ENCODE measurements at regions of chr6 and their contacts with region 1.

Region 1: GRCh38 chr6:24774696-24775519 is at the start of gene GMNN:
- DNase-seq: peak; percentile 55
- ATAC-seq: peak; percentile 97
- H3K4me3 ChIP-seq: peak within 1 kb of the TSS; percentile 95 to 99
- H3K27ac ChIP-seq: peak within 1 kb of the TSS; percentile 96
- H3K4me1 ChIP-seq: peaks cover 26% of the 10 kb centered on the region; the same call in 1 of the 2 replicates
- H3K27me3 ChIP-seq: no peaks in the 10 kb centered on the region
- CTCF ChIP-seq: no peak
- total RNA-seq, gene GMNN: 53.1 TPM

Region 2: DNA sequence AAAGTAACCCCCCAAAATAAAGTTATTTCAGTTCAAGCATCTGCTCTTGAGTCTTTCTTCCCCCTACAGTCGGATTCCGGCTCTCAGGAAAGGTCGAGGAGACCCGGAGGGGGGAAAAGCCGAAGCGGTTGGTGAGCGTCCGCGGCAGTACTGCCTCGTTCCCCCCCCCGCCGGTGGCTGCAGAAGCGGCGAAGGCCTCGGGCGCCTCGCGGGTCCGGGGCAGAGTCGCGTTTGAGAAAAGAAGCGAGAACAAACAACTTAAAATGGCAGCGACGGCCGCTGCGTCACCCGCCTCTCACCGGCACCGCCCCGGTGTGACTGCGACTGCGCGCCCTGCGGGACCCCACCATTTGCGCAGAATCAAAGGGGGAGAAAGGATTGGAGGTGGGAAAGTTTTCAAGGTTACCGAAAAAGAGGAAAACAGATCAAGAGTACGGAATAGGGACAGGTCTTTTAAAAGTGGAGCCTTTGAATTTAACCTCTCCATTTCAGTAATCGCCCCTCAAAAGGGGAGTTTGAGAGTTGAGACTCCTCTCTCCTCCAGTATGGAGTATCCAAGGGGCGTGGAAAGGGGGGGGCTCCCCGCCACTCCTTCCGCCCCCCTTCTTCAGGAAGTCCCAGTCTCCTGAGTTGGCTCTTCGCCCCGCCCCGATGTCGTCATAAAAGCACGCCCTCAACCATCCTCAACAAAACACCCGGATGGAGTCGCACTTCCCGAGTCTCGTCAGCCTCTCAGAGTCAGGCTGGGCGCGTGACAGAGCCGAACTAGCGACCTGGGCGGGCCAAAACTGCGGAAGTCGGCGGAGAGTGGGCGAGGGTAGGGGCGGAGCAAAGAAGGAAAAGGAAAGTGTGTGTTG is 54.1 kb before region 1 on chr6:
- CTCF ChIA-PET with region 1: interaction called, 5 read pairs
- POLR2A ChIA-PET with region 1: interaction called, 14 read pairs
- in situ Hi-C with region 1: no loop called
- intact Hi-C with region 1: no loop called
- DNase-seq: peak; percentile 98
- ATAC-seq: peak; percentile 98
- H3K4me3 ChIP-seq: peak overlapping the region; percentile 88 to 93
- H3K27ac ChIP-seq: peak overlapping the region; percentile 98
- H3K4me1 ChIP-seq: peaks cover 16% of the 10 kb centered on the region
- H3K27me3 ChIP-seq: no peaks in the 10 kb centered on the region
- CTCF ChIP-seq: no peak

Region 3: DNA sequence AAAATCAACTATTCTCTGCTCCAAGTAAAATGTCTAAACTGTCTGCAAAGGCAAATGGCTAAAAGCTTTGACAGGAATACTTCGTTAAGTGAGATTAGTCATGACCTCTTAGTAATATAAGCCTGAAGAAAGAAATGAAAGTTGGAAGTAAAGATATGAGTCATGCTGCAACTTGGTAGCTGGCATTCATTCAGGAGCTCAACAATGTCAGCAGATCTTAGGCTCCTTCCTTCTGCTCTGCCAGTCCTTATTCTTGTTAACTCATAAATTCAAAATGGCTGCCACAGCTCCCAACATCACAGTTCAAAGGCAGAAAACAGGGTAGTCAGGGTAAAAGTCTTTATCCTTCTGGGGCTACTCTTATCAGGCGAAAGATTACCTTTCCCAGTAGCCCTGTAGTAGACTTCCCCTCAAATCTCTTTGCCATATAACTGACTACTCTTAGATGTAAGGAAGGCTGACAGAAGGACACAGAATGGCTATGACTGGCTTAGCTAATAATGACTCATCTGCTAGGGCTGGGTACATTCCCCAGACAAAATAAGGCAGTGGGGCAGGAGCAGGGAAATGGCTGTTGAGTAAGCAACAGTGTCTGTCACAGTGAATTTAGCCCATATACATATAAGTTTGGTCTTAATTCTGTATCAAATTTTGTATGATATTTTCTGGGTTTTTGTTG is 31.5 kb before region 1 on chr6:
- CTCF ChIA-PET with region 1: no interaction called
- POLR2A ChIA-PET with region 1: no interaction called
- in situ Hi-C with region 1: no loop called
- intact Hi-C with region 1: no loop called
- DNase-seq: peak; percentile 73
- ATAC-seq: peak; percentile 92
- H3K4me3 ChIP-seq: no peak overlapping the region
- H3K27ac ChIP-seq: no peak overlapping the region
- H3K4me1 ChIP-seq: no peaks in the 10 kb centered on the region
- H3K27me3 ChIP-seq: no peaks in the 10 kb centered on the region
- CTCF ChIP-seq: no peak

Region 4: GRCh38 chr6:24761193-24761835 is 13.6 kb before region 1 on chr6:
- CTCF ChIA-PET with region 1: no interaction called
- POLR2A ChIA-PET with region 1: interaction called, 11 read pairs
- in situ Hi-C with region 1: no loop called
- intact Hi-C with region 1: no loop called
- DNase-seq: no peak
- ATAC-seq: peak; percentile 79
- H3K4me3 ChIP-seq: no peak overlapping the region
- H3K27ac ChIP-seq: no peak overlapping the region
- H3K4me1 ChIP-seq: no peaks in the 10 kb centered on the region
- H3K27me3 ChIP-seq: no peaks in the 10 kb centered on the region
- CTCF ChIP-seq: no peak